ENCODE measurements at regions of chr15 and their contacts with region 1.

Region 1: GRCh38 chr15:98626153-98626552 is 22.2 kb upstream of the IGF1R start:
- DNase-seq: no peak
- H3K4me3 ChIP-seq: no peak overlapping the region
- H3K27ac ChIP-seq: no peak overlapping the region
- H3K4me1 ChIP-seq: no peaks in the 10 kb centered on the region
- H3K27me3 ChIP-seq: no peaks in the 10 kb centered on the region
- CTCF ChIP-seq: no peak

Region 2: GRCh38 chr15:98586066-98586465 is 40.1 kb before region 1 on chr15:
- intact Hi-C with region 1: loop called (anchors 5 kb)
- DNase-seq: no peak
- H3K4me3 ChIP-seq: no peak overlapping the region
- H3K27ac ChIP-seq: no peak overlapping the region
- H3K4me1 ChIP-seq: no peaks in the 10 kb centered on the region
- H3K27me3 ChIP-seq: no peaks in the 10 kb centered on the region
- CTCF ChIP-seq: no peak

Measured in ascending aorta (tissue), 2 donors.